ENCODE measurements at regions of chr15 and their contacts with region 1.

Region 1: DNA sequence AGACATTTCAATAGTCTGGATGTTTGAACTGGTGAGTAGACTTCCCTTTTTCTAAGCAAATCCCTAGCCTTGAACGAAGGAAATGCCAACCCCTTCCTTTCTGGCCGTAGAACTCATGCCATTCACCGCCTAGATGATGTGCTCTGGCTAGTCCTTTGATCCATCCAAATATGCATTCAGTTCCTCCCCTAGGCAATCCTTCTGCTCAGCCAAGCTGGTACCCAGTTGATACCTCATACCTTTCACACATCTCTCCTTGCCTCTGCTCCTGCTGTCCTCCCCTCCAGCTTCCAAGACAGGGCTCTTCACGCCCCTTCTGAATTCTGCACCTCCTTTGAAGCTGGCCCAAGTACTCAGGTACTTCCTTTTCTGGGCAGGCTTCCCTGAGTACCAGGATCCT is 40.5 kb upstream of the ATOSA start:
- DNase-seq: no peak
- ATAC-seq: no peak
- H3K4me3 ChIP-seq: no peak overlapping the region
- H3K27ac ChIP-seq: no peak overlapping the region
- H3K4me1 ChIP-seq: no peaks in the 10 kb centered on the region
- H3K27me3 ChIP-seq: no peaks in the 10 kb centered on the region
- CTCF ChIP-seq: no peak
- POLR2A ChIP-seq: no peak

Region 2: DNA sequence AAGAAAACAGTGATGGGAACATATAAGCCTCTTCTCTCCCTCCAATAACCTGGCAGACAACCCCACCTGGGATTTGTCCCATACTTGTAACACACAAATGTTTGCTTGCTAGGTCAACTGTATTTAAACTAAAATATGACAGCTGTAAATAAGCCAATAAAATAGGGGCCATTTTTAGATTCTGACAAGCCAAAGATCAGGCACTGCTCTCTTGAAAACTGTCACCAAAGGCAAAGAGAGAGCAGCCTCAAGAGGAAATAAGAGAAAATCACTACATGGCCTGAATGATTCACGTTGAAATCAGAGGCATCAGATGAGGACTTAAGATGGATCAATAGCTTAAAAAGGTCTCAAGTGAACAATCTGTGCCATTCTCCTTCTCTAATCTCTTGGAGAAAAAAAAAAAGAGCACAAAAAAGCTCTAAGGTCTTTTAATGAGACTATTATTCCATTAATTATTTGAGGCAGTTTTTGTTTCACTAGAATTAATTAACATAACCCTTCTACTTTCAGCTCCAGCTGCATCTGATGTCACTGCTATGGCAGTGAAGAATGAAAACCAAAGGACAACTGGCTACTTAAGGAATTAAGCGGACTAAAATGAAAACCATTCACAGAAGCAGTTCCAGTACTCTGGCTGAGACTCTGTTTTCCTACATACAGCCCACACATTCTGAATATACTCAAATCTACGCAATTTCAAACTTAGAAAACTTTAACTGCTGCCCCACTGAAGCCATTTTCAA is 210.0 kb before region 1 on chr15:
- in situ Hi-C with region 1: no loop called
- intact Hi-C with region 1: no loop called
- DNase-seq: no peak
- ATAC-seq: peak in 1 of 2 donors; percentile 70
- H3K4me3 ChIP-seq: no peak overlapping the region
- H3K27ac ChIP-seq: peak overlapping the region in 2 of 4 donors; percentile 30 to 63
- H3K4me1 ChIP-seq: peaks cover 39 to 55% of the 10 kb centered on the region in 2 donors
- H3K27me3 ChIP-seq: no peaks in the 10 kb centered on the region
- CTCF ChIP-seq: no peak
- POLR2A ChIP-seq: no peak

Region 3: GRCh38 chr15:52689562-52689961 is 30.1 kb before region 1 on chr15:
- in situ Hi-C with region 1: loop called in 2 of 4 experiments (anchors 5 kb)
- intact Hi-C with region 1: no loop called
- DNase-seq: no peak
- ATAC-seq: peak in 1 of 2 donors; percentile 39
- H3K4me3 ChIP-seq: no peak overlapping the region
- H3K27ac ChIP-seq: peak overlapping the region in 1 of 4 donors; percentile 48
- H3K4me1 ChIP-seq: peaks cover 0 to 8% of the 10 kb centered on the region in 2 donors
- H3K27me3 ChIP-seq: no peaks in the 10 kb centered on the region
- CTCF ChIP-seq: no peak
- POLR2A ChIP-seq: no peak